ENCODE measurements at regions of chr3 and their contacts with region 1.

Region 1: GRCh38 chr3:150183678-150184425 is 213.2 kb upstream of the PFN2 start:
- DNase-seq: peak; percentile 68
- H3K4me3 ChIP-seq: peak overlapping the region; percentile 10 to 44 (median 29)
- H3K27ac ChIP-seq: no peak overlapping the region
- H3K4me1 ChIP-seq: peaks cover 12% of the 10 kb centered on the region
- H3K27me3 ChIP-seq: no peaks in the 10 kb centered on the region
- CTCF ChIP-seq: peak; percentile 57 to 79

Region 2: GRCh38 chr3:149765762-149766334 is 418.0 kb before region 1 on chr3:
- CTCF ChIA-PET with region 1: no interaction called
- dilution Hi-C with region 1: no loop called
- in situ Hi-C with region 1: no loop called
- intact Hi-C with region 1: loop called (anchors 10 kb)
- DNase-seq: peak; percentile 21
- H3K4me3 ChIP-seq: no peak overlapping the region
- H3K27ac ChIP-seq: no peak overlapping the region
- H3K4me1 ChIP-seq: no peaks in the 10 kb centered on the region
- H3K27me3 ChIP-seq: no peaks in the 10 kb centered on the region
- CTCF ChIP-seq: peak; percentile 37 to 62

Region 3: DNA sequence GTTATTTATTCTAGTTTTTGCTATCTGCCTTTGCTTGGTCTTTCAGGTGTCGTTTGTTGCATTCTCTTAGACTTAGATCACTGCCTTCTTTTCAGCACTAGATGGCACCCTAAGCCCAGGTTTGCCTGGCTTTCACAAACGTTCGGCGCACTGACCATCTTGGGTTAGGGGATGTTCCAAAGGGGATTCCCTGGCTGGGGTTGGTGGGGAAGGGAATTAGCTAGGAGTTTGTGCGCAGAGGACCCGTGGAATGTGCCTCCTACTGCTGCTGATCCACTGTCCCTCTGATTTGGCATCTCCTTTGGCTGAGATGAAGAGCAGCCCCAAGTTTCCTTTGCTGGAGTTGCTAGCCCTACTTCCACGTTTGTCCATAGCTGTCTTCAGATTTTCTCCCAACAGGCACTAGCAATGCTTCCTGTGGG is 247.0 kb before region 1 on chr3:
- CTCF ChIA-PET with region 1: interaction called, 4 read pairs
- dilution Hi-C with region 1: no loop called
- in situ Hi-C with region 1: no loop called
- intact Hi-C with region 1: loop called (anchors 1 kb)
- DNase-seq: peak; percentile 32
- H3K4me3 ChIP-seq: no peak overlapping the region
- H3K27ac ChIP-seq: no peak overlapping the region
- H3K4me1 ChIP-seq: no peaks in the 10 kb centered on the region
- H3K27me3 ChIP-seq: no peaks in the 10 kb centered on the region
- CTCF ChIP-seq: peak; percentile 78 to 81

Region 4: GRCh38 chr3:150079029-150079739 is 104.7 kb before region 1 on chr3:
- CTCF ChIA-PET with region 1: no interaction called
- dilution Hi-C with region 1: no loop called
- in situ Hi-C with region 1: no loop called
- intact Hi-C with region 1: loop called (anchors 1 kb)
- DNase-seq: peak; percentile 87
- H3K4me3 ChIP-seq: no peak overlapping the region
- H3K27ac ChIP-seq: peak overlapping the region; percentile 75
- H3K4me1 ChIP-seq: peaks cover 46% of the 10 kb centered on the region
- H3K27me3 ChIP-seq: no peaks in the 10 kb centered on the region
- CTCF ChIP-seq: peak in 1 of 2 donors; percentile 3

Region 5: GRCh38 chr3:150202711-150203110 is 18.9 kb after region 1 on chr3:
- CTCF ChIA-PET with region 1: no interaction called
- dilution Hi-C with region 1: no loop called
- in situ Hi-C with region 1: no loop called
- intact Hi-C with region 1: no loop called
- DNase-seq: no peak
- H3K4me3 ChIP-seq: no peak overlapping the region
- H3K27ac ChIP-seq: no peak overlapping the region
- H3K4me1 ChIP-seq: no peaks in the 10 kb centered on the region
- H3K27me3 ChIP-seq: no peaks in the 10 kb centered on the region
- CTCF ChIP-seq: no peak

Region 6: GRCh38 chr3:150555859-150556436 is 372.1 kb after region 1 on chr3:
- CTCF ChIA-PET with region 1: no interaction called
- dilution Hi-C with region 1: no loop called
- in situ Hi-C with region 1: no loop called
- intact Hi-C with region 1: no loop called
- DNase-seq: no peak
- H3K4me3 ChIP-seq: no peak overlapping the region
- H3K27ac ChIP-seq: no peak overlapping the region
- H3K4me1 ChIP-seq: no peaks in the 10 kb centered on the region
- H3K27me3 ChIP-seq: no peaks in the 10 kb centered on the region
- CTCF ChIP-seq: no peak

Measured in mammary epithelial cell (primary cell).